ENCODE measurements at regions of chr1 and their contacts with region 1.

Region 1: GRCh38 chr1:114979278-114979891 is 50.2 kb upstream of the TSHB start:
- DNase-seq: peak; percentile 57 to 59
- H3K4me3 ChIP-seq: no peak overlapping the region
- H3K27ac ChIP-seq: no peak overlapping the region
- H3K4me1 ChIP-seq: no peaks in the 10 kb centered on the region
- H3K27me3 ChIP-seq: no peaks in the 10 kb centered on the region
- CTCF ChIP-seq: peak; percentile 96

Region 2: GRCh38 chr1:114130213-114130612 is 849.2 kb before region 1 on chr1:
- CTCF ChIA-PET with region 1: interaction called, 10 read pairs
- POLR2A ChIA-PET with region 1: no interaction called
- intact Hi-C with region 1: no loop called
- DNase-seq: no peak
- H3K4me3 ChIP-seq: no peak overlapping the region
- H3K27ac ChIP-seq: no peak overlapping the region
- H3K4me1 ChIP-seq: peaks cover 14% of the 10 kb centered on the region
- H3K27me3 ChIP-seq: no peaks in the 10 kb centered on the region
- CTCF ChIP-seq: no peak

Region 3: DNA sequence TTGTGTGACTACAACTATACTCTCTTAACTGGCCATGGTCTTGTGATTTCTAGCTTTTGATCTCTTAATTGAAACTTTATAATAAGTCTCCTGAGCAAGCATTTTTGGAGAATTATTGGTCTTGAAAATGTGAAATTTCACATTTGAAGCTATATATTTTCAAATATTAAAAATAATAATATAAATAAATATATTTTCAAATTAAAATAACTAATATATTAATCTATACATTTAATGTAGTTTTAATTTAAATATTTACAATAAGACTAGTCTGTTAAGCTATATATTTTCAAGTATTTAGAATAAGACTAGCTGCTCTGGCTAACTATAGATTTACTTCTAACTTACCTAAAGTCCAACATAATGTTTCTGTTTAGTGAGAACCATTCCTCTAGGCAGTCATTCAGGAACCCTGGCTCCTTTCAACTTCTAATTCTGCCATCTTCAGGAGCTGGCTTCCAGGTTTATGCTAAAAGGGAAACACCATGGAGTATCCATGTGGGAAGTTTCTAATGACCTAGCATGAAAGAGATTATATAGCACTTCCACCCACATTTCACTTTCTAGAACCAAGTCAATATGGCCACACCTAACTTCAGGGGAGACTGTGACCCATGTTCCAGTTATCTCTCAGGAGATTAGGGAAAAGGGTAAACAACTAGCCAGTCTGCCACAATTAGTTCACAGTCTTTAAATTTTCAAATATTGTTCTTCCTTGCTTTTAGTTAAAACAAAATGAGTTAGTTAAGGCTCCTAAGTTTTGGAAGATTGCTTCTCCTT is 18.3 kb after region 1 on chr1:
- CTCF ChIA-PET with region 1: no interaction called
- POLR2A ChIA-PET with region 1: no interaction called
- intact Hi-C with region 1: no loop called
- DNase-seq: no peak
- H3K4me3 ChIP-seq: no peak overlapping the region
- H3K27ac ChIP-seq: no peak overlapping the region
- H3K4me1 ChIP-seq: peaks cover 9% of the 10 kb centered on the region
- H3K27me3 ChIP-seq: no peaks in the 10 kb centered on the region
- CTCF ChIP-seq: no peak

Region 4: GRCh38 chr1:115040501-115040900 is 61.1 kb after region 1 on chr1:
- CTCF ChIA-PET with region 1: no interaction called
- POLR2A ChIA-PET with region 1: no interaction called
- intact Hi-C with region 1: no loop called
- DNase-seq: no peak
- H3K4me3 ChIP-seq: no peak overlapping the region
- H3K27ac ChIP-seq: no peak overlapping the region
- H3K4me1 ChIP-seq: no peaks in the 10 kb centered on the region
- H3K27me3 ChIP-seq: no peaks in the 10 kb centered on the region
- CTCF ChIP-seq: peak; percentile 25; the same call in 1 of the 2 replicates

Region 5: DNA sequence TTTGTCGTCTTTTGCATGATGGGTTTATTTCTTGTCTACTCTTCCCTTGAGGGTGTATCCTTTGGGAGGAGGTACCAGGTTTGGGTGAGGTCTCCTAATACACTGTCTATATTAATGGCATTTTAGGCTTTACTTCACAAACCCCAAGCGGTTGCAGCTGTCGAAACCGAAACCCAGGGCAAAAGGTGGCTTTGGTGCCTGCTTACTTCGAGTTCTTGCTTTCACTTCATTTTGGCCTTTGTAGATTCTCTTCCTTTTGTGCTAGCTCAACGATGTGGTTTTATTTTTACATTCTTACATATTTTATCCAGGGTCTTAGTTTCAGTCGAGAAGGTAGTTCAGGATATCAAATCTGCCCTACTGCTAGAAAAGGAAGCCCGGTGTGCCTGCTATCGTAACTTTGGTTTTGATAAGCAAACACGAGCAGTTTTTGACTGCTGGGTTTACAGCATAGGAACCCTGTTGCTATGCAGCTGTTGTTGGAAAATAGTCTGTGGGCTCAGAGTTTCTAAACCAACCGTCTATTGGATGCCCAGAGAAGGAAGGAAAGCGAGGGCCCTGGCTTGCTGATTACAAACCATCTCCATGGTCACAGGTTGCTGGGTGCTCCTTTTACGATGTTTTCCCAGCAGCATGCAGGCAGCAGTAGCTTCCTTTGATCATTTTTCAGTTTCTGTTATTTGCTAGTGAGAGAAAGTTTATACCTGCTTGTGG is 119.8 kb after region 1 on chr1:
- CTCF ChIA-PET with region 1: no interaction called
- POLR2A ChIA-PET with region 1: no interaction called
- intact Hi-C with region 1: loop called (anchors 5 kb)
- DNase-seq: peak; percentile 61 to 95
- H3K4me3 ChIP-seq: peak overlapping the region; percentile 55
- H3K27ac ChIP-seq: peak overlapping the region; percentile 78
- H3K4me1 ChIP-seq: peaks cover 23% of the 10 kb centered on the region
- H3K27me3 ChIP-seq: no peaks in the 10 kb centered on the region
- CTCF ChIP-seq: no peak

Region 6: GRCh38 chr1:115463363-115463746 is 484.0 kb after region 1 on chr1:
- CTCF ChIA-PET with region 1: no interaction called
- POLR2A ChIA-PET with region 1: no interaction called
- intact Hi-C with region 1: loop called (anchors 2 kb)
- DNase-seq: peak in 1 of 2 experiments; percentile 56
- H3K4me3 ChIP-seq: no peak overlapping the region
- H3K27ac ChIP-seq: no peak overlapping the region
- H3K4me1 ChIP-seq: peaks cover 50% of the 10 kb centered on the region
- H3K27me3 ChIP-seq: no peaks in the 10 kb centered on the region
- CTCF ChIP-seq: peak; percentile 87

Region 7: DNA sequence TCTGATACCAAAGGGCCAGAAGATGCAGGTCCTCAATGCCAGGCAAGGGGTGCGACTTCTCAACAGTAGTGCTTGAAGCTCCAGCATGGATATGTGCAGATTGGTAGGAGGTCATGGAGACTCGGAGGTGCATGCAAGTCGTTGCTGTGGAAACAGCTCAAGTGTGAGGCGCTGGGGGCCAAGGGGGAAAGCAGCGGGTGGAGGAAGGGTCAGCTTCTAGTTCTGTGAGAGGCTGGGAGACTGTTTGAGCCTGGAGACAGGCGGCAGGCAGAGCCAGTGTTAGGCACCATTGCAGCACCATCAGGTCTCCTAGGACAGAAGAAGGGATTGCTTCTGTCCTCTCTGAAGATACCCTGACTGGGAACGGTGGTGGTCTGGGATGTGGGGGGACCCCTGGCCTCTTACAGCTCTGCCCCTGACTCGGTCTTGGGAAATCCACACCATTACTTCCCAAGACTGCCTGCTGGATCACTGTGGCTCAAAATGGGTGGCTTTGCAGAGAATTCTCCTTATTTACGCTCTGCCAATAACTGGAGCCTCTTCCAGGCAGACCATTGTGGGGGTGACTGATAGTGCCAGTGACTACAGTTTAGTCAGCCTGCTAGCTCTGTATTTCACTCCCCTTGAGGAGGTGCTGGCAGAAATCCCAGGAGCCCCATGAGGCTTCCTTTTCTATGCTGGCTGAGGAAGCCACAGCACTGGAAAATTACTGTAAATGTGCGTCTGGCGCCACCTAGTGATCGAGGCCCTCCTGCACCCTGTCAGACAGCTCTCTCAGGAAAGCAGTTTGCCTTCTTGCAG is 616.1 kb after region 1 on chr1:
- CTCF ChIA-PET with region 1: no interaction called
- POLR2A ChIA-PET with region 1: no interaction called
- intact Hi-C with region 1: loop called (anchors 1 kb)
- DNase-seq: peak; percentile 87 to 91
- H3K4me3 ChIP-seq: no peak overlapping the region
- H3K27ac ChIP-seq: no peak overlapping the region
- H3K4me1 ChIP-seq: peaks cover 25% of the 10 kb centered on the region
- H3K27me3 ChIP-seq: no peaks in the 10 kb centered on the region
- CTCF ChIP-seq: peak; percentile 99

Measured in PC-9 (cell line).